ENCODE measurements at regions of chr17 and their contacts with region 1.

Region 1: DNA sequence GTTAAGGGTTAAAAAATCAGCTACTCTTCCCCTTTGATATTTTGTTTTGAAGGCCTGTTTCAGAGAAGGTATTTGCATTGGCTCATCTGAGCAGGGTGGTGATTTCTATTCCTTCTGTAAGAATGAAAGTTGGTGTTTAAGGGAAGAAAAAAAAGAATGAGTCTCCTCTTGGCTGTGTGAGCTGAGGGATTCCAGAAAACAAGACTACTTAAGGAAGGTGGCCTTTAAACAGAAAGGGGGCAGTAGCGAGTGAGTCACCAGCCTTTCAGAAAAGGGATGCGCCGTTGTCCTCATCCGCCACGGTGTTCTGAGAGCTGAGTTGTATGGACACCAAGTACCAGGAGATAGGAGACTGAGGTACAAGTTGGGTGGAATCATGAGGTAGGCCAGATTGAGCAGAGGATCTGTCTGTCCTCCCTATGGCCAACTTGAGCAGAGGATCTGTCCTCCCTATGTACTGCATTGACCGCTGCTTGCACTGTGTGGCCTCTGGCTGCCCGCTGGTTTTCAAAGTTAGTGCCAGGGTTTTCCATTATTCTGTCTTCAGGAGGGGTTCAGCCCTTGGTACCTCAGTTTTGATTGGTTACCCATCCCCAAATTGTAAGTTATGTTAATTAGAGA is 8.2 kb downstream of the PRKCA start:
- DNase-seq: no peak
- H3K4me3 ChIP-seq: no peak overlapping the region
- H3K27ac ChIP-seq: no peak overlapping the region
- H3K4me1 ChIP-seq: peaks cover 12% of the 10 kb centered on the region
- H3K27me3 ChIP-seq: no peaks in the 10 kb centered on the region
- CTCF ChIP-seq: no peak

Region 2: DNA sequence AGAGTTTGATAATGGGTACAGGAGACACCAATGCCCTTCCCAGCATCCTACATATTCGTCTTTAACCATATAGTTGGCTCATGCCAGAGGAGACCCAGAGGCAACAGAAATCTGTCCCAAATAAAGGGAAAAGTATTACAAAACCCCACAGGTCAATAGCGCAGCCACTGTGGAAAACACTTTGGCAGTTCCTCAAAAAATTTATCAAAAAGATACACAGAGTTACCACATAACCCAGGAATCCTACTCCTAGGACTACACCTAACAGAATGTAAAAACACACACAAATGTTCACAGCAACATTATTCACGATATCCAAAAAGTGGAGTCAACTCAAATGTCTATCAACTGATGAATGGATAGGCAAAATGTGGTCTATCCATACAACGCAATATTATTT is 254.5 kb before region 1 on chr17:
- CTCF ChIA-PET with region 1: no interaction called
- POLR2A ChIA-PET with region 1: no interaction called
- intact Hi-C with region 1: no loop called
- DNase-seq: no peak
- H3K4me3 ChIP-seq: no peak overlapping the region
- H3K27ac ChIP-seq: no peak overlapping the region
- H3K4me1 ChIP-seq: no peaks in the 10 kb centered on the region
- H3K27me3 ChIP-seq: no peaks in the 10 kb centered on the region
- CTCF ChIP-seq: no peak

Region 3: GRCh38 chr17:66200685-66201092 is 109.9 kb before region 1 on chr17:
- CTCF ChIA-PET with region 1: interaction called, 12 read pairs
- POLR2A ChIA-PET with region 1: no interaction called
- intact Hi-C with region 1: no loop called
- DNase-seq: peak; percentile 21 to 42
- H3K4me3 ChIP-seq: no peak overlapping the region
- H3K27ac ChIP-seq: no peak overlapping the region
- H3K4me1 ChIP-seq: no peaks in the 10 kb centered on the region
- H3K27me3 ChIP-seq: no peaks in the 10 kb centered on the region
- CTCF ChIP-seq: peak; percentile 72

Region 4: DNA sequence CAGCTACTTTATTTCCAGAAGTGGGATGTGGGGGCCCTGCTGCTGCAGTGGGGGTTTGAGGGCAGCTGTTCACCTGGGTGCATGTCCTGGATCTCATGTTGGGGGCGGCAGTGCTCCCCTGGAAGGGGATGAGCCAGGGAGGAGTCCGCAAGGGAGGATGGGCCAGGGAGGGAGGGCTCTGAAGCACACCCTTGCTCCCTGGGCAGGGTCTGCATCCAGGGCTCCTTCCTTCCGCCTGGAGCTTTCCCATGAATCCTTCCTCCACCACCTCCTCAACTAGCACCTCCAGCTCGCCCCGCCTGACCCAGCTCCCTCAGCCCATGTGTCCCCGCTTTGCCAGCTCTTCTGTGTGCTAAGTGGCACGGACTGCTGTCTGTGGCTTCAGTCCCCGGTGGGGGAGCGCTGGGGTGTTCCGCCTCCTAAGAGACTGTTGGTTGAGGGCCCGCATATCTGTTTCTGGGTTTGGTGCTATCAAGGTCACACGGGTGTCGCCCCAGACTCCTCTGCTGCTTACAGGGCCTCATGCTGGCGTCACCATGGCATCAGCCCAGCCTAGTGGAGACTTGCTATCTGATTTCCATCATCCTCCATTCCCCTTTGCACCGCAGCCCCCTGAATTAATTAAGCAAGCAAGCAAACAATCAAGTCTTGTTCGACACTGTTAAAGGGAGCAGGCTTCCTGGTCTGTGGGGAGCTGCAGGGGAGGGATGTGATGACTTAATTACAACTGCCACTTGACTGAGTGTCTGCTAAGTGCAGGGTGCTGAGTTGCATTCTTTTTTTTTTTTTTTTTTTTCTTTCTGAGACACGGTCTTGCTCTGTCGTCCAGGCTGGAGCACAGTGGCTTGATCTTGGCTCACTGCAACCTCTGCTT is 63.5 kb after region 1 on chr17:
- CTCF ChIA-PET with region 1: no interaction called
- POLR2A ChIA-PET with region 1: no interaction called
- intact Hi-C with region 1: no loop called
- DNase-seq: no peak
- H3K4me3 ChIP-seq: no peak overlapping the region
- H3K27ac ChIP-seq: no peak overlapping the region
- H3K4me1 ChIP-seq: 0 out of 2 replicates have a peak, but pooled peaks cover 8% of the 10 kb centered on the region
- H3K27me3 ChIP-seq: no peaks in the 10 kb centered on the region
- CTCF ChIP-seq: no peak

Region 5: DNA sequence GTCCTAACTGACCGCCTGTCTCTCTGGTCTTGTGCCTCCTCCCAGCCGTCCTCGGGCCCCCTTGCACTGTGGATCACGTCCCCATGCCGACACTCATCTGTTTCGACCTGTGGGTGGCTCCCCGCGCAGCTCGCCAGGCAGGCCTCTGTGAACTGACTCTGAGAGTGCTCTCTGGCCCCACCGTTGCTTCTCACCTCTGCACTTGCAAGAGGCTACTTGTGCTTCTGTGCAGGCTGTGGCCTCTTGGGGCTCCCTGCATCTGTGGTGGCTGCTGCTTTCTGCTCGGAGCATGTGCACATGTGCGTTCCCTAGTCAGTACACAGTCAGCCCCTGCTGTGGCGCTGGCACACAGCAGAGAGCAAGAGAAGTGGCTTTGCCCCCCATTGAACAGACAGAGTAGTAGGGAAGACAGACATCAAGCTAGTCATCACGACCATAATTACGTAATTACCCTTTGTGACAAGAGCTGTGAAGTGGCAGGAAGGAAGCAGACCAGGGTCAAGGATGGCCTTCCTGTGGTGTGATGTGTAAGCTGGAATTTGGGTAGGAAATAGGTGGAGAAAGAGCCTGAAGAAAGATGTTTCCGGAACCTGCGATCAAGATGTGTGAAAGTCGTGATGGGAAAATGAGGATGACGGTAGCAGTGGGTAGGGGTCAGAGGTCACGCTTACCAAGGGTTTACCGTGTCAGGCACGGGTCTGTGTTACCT is 268.3 kb after region 1 on chr17:
- CTCF ChIA-PET with region 1: no interaction called
- POLR2A ChIA-PET with region 1: no interaction called
- intact Hi-C with region 1: no loop called
- DNase-seq: no peak
- H3K4me3 ChIP-seq: no peak overlapping the region
- H3K27ac ChIP-seq: no peak overlapping the region
- H3K4me1 ChIP-seq: peaks cover 8% of the 10 kb centered on the region; the same call in 1 of the 2 replicates
- H3K27me3 ChIP-seq: no peaks in the 10 kb centered on the region
- CTCF ChIP-seq: no peak

Region 6: DNA sequence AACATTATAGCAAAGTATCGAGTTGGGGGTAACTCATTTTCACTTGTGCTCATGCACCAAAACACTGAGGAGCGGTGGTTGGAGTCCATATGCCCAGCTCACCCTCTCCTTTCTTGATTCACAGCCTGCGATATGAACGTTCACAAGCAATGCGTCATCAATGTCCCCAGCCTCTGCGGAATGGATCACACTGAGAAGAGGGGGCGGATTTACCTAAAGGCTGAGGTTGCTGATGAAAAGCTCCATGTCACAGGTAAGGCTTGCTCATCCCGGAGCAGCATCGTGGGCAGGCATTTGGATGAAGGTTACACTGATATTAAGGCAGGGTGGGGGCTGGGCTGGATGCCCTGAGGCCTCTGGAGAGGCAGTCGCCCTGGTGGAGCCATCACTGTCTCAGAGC is 334.6 kb after region 1 on chr17:
- CTCF ChIA-PET with region 1: interaction called, 10 read pairs
- POLR2A ChIA-PET with region 1: no interaction called
- intact Hi-C with region 1: no loop called
- DNase-seq: no peak
- H3K4me3 ChIP-seq: no peak overlapping the region
- H3K27ac ChIP-seq: no peak overlapping the region
- H3K4me1 ChIP-seq: no peaks in the 10 kb centered on the region
- H3K27me3 ChIP-seq: no peaks in the 10 kb centered on the region
- CTCF ChIP-seq: no peak

Measured in PC-9 (cell line).